Transverse colon (tissue), 4 donors: ENCODE measurements at regions of chr1 and their contacts with region 1.

Region 1: DNA sequence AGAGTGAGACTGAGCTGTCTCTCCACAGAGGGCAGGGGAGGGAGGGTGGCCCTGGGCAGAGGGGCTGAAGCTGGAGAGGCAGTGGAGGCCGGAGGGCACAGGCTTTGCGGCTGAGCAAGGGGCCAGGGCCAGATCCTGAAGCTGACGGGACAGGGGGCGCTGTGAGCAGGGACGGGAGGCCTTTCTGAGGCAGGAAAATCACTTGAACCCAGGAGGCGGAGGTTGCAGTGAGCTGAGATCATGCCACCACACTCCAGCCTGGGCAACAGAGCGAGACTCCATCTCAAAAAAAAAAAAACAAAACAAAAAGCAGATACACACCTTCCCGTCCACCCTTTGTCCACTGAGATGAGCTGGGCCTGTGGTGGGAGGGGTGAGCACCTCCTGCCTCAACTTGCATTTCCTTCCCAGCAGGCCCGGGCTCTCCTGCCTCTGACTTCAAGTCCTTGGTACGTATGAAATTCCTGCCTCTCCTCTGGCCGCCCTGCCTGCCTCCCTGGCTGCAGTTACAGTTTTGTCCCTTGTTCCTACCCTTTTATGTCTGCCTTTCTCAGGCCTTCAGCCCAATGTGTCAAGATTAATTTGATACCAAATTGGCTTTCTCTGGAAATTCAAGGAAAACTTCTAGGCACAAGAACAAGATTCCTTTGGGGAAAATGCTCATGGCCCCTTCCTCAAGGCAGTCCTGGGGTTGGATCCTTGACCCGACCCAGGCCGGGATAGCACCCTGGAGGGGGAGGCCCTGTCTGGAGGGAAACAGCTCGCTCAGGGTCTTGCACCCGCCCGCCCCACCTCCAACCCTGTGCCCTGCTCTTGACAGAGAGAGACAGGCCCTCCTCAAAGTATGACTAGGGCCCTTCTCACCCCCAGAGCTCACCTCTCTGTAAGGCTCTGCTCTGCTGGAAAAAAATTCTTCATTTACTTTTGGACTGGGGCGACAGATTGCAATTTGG is 11.2 kb upstream of the ADAMTSL4 start:
- DNase-seq: no peak
- H3K4me3 ChIP-seq: no peak overlapping the region
- H3K27ac ChIP-seq: peak overlapping the region in 2 of 4 donors; percentile 66 to 67
- H3K4me1 ChIP-seq: peaks cover 0 to 23% (median 6%) of the 10 kb centered on the region in 4 donors
- H3K27me3 ChIP-seq: no peaks in the 10 kb centered on the region
- CTCF ChIP-seq: no peak
- EP300 ChIP-seq: no peak
- POLR2A ChIP-seq: no peak

Region 2: GRCh38 chr1:150321826-150322166 is 216.2 kb before region 1 on chr1:
- in situ Hi-C with region 1: no loop called
- intact Hi-C with region 1: no loop called
- DNase-seq: no peak
- H3K4me3 ChIP-seq: peak overlapping the region; percentile 67 to 78 (median 72)
- H3K27ac ChIP-seq: peak overlapping the region; percentile 89 to 94 (median 90)
- H3K4me1 ChIP-seq: peaks cover 0 to 14% (median 11%) of the 10 kb centered on the region in 4 donors
- H3K27me3 ChIP-seq: no peaks in the 10 kb centered on the region
- CTCF ChIP-seq: no peak
- EP300 ChIP-seq: no peak
- POLR2A ChIP-seq: no peak

Region 3: DNA sequence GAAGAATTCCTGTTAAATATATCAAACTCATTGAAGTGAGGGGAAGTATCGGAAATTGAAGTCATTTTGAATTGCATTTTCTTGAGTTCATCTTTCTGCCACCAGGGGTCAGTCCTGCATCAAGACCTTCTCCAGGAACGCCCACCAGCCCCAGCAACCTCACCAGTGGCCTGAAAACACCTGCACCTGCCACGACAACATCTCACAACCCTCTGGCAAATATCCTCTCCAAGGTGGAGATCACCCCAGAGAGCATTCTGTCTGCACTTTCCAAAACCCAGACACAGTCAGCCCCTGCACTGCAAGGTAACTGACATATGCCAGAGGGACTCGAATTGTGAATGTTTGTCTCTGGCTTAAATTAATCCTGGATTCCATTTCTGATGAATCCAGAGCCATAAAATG is 73.6 kb before region 1 on chr1:
- in situ Hi-C with region 1: loop called in 2 of 4 experiments (anchors 10 kb)
- intact Hi-C with region 1: no loop called
- DNase-seq: peak; percentile 65
- H3K4me3 ChIP-seq: no peak overlapping the region
- H3K27ac ChIP-seq: no peak overlapping the region
- H3K4me1 ChIP-seq: no peaks in the 10 kb centered on the region
- H3K27me3 ChIP-seq: no peaks in the 10 kb centered on the region
- CTCF ChIP-seq: peak; percentile 72 to 82 (median 79)
- EP300 ChIP-seq: no peak
- POLR2A ChIP-seq: no peak

Region 4: GRCh38 chr1:150486964-150487762 is 50.8 kb before region 1 on chr1 and contains the start of gene TARS2:
- in situ Hi-C with region 1: loop called in 1 of 4 experiments (anchors 10 kb)
- intact Hi-C with region 1: loop called (anchors 10 kb)
- DNase-seq: peak; percentile 97
- H3K4me3 ChIP-seq: peak within 1 kb of the TSS; percentile 55 to 80 (median 65)
- H3K27ac ChIP-seq: peak within 1 kb of the TSS; percentile 79 to 85 (median 80)
- H3K4me1 ChIP-seq: peaks cover 0 to 8% (median 4%) of the 10 kb centered on the region in 4 donors
- H3K27me3 ChIP-seq: no peaks in the 10 kb centered on the region
- CTCF ChIP-seq: peak; percentile 29 to 77 (median 36)
- EP300 ChIP-seq: no peak
- POLR2A ChIP-seq: peak; percentile 77
- total RNA-seq, gene TARS2: 2.8 to 22.7 (median 9.0) TPM

Region 5: DNA sequence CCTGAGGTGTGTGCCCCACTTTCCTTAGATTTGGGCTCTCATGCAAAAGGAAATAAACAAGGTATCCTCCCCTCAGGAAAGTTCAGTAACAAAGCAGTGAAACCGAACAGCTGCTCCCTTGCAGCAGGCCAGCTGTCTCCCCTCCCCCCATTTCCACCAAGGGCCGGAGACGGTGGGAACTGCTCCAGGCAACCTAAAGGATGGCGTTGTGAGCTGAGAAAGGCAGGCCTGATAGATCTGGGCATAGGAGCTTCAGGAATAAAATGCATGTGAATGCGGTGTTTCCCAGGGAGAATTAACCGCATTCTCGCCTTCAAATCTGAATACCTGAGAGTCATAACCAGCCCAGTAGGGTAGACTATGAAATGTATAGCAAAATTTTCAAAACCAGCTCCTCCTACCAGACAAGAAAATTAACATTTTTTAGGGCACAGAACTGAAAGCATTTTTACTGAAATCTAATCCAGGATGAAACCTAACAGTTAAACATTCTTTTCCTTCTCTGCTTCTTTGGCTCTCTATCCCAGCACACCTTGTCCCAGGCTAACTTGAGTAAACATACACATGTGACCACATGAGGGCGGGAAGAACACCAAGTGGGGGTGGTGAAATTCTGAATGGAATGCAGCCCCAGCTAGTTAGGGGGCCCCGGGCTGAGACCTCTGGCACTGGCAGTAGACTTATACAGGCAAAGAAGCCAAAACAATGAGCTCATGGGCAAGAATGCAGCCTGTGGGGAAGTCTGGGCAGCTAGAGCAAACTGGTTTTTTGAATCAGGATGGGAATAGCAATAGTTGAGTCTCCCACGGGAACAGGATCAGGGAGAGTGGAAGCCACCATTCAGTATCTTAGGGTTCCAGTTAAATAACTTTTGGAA is 29.9 kb after region 1 on chr1:
- in situ Hi-C with region 1: no loop called
- intact Hi-C with region 1: no loop called
- DNase-seq: peak; percentile 84
- H3K4me3 ChIP-seq: peak overlapping the region in 3 of 4 donors; percentile 3 to 41 (median 15)
- H3K27ac ChIP-seq: peak overlapping the region; percentile 98 to 99 (median 98)
- H3K4me1 ChIP-seq: peaks cover 75 to 100% (median 89%) of the 10 kb centered on the region in 4 donors
- H3K27me3 ChIP-seq: no peaks in the 10 kb centered on the region
- CTCF ChIP-seq: no peak
- EP300 ChIP-seq: peak; percentile 95
- POLR2A ChIP-seq: peak; percentile 27